ENCODE measurements at regions of chr1 and their contacts with region 1.

Region 1: GRCh38 chr1:45521398-45522323 is at the start of gene PRDX1:
- DNase-seq: peak; percentile 98
- ATAC-seq: peak; percentile 89
- H3K4me3 Mint-ChIP-seq: peak within 1 kb of the TSS; percentile 96
- H3K27ac Mint-ChIP-seq: peak within 1 kb of the TSS; percentile 94
- H3K4me1 Mint-ChIP-seq: peaks cover 47% of the 10 kb centered on the region
- H3K27me3 Mint-ChIP-seq: peaks cover 4% of the 10 kb centered on the region
- total RNA-seq, gene PRDX1: 473 to 580 TPM

Region 2: GRCh38 chr1:44775078-44775929 is 746.4 kb before region 1 on chr1 and contains the start of gene RPS8:
- CTCF ChIA-PET with region 1: no interaction called
- POLR2A ChIA-PET with region 1: interaction called, 3 read pairs
- intact Hi-C with region 1: loop called in 1 of 2 experiments (anchors 5 kb)
- DNase-seq: peak; percentile 94
- ATAC-seq: peak; percentile 84
- H3K4me3 Mint-ChIP-seq: peak within 1 kb of the TSS; percentile 96
- H3K27ac Mint-ChIP-seq: peak within 1 kb of the TSS; percentile 100
- H3K4me1 Mint-ChIP-seq: peaks cover 33% of the 10 kb centered on the region
- H3K27me3 Mint-ChIP-seq: no peaks in the 10 kb centered on the region
- total RNA-seq, gene RPS8: 3,005 to 3,275 TPM

Region 3: GRCh38 chr1:45535988-45536766 is 14.5 kb after region 1 on chr1:
- CTCF ChIA-PET with region 1: interaction called, 3 read pairs
- POLR2A ChIA-PET with region 1: interaction called, 11 read pairs
- intact Hi-C with region 1: loop called in 1 of 2 experiments (anchors 2 kb)
- DNase-seq: no peak
- ATAC-seq: peak; percentile 93
- H3K4me3 Mint-ChIP-seq: no peak overlapping the region
- H3K27ac Mint-ChIP-seq: no peak overlapping the region
- H3K4me1 Mint-ChIP-seq: peaks cover 15% of the 10 kb centered on the region
- H3K27me3 Mint-ChIP-seq: no peaks in the 10 kb centered on the region

Region 4: GRCh38 chr1:45550401-45551351 is 29.0 kb after region 1 on chr1 and contains the start of gene AKR1A1:
- CTCF ChIA-PET with region 1: interaction called, 12 read pairs
- POLR2A ChIA-PET with region 1: interaction called, 27 read pairs
- intact Hi-C with region 1: loop called (anchors 1 kb)
- DNase-seq: peak; percentile 95
- ATAC-seq: peak; percentile 94
- H3K4me3 Mint-ChIP-seq: peak within 1 kb of the TSS; percentile 94
- H3K27ac Mint-ChIP-seq: peak within 1 kb of the TSS; percentile 94
- H3K4me1 Mint-ChIP-seq: peaks cover 16% of the 10 kb centered on the region
- H3K27me3 Mint-ChIP-seq: no peaks in the 10 kb centered on the region
- total RNA-seq, gene AKR1A1: 140 to 181 TPM

Region 5: GRCh38 chr1:45750298-45751038 is 228.8 kb after region 1 on chr1 and contains the start of gene IPP:
- CTCF ChIA-PET with region 1: no interaction called
- POLR2A ChIA-PET with region 1: no interaction called
- intact Hi-C with region 1: loop called in 1 of 2 experiments (anchors 1 kb)
- DNase-seq: peak; percentile 97
- ATAC-seq: peak; percentile 99
- H3K4me3 Mint-ChIP-seq: peak within 1 kb of the TSS; percentile 93
- H3K27ac Mint-ChIP-seq: peak within 1 kb of the TSS; percentile 95
- H3K4me1 Mint-ChIP-seq: peaks cover 27% of the 10 kb centered on the region
- H3K27me3 Mint-ChIP-seq: no peaks in the 10 kb centered on the region
- total RNA-seq, gene IPP: 11.6 to 21.8 TPM

Region 6: GRCh38 chr1:46017870-46018503 is 496.3 kb after region 1 on chr1:
- CTCF ChIA-PET with region 1: no interaction called
- POLR2A ChIA-PET with region 1: no interaction called
- intact Hi-C with region 1: no loop called
- DNase-seq: no peak
- ATAC-seq: no peak
- H3K4me3 Mint-ChIP-seq: no peak overlapping the region
- H3K27ac Mint-ChIP-seq: no peak overlapping the region
- H3K4me1 Mint-ChIP-seq: no peaks in the 10 kb centered on the region
- H3K27me3 Mint-ChIP-seq: no peaks in the 10 kb centered on the region